ENCODE measurements at regions of chr11 and their contacts with region 1.

Region 1: GRCh38 chr11:46625391-46625790 is 8.0 kb downstream of the ATG13 start:
- DNase-seq: no peak
- H3K4me3 ChIP-seq: no peak overlapping the region
- H3K27ac ChIP-seq: no peak overlapping the region
- H3K4me1 ChIP-seq: no peaks in the 10 kb centered on the region
- H3K27me3 ChIP-seq: no peaks in the 10 kb centered on the region
- CTCF ChIP-seq: no peak

Region 2: GRCh38 chr11:46800177-46800576 is 174.8 kb after region 1 on chr11:
- intact Hi-C with region 1: loop called (anchors 10 kb)
- DNase-seq: no peak
- H3K4me3 ChIP-seq: no peak overlapping the region
- H3K27ac ChIP-seq: no peak overlapping the region
- H3K4me1 ChIP-seq: no peaks in the 10 kb centered on the region
- H3K27me3 ChIP-seq: no peaks in the 10 kb centered on the region
- CTCF ChIP-seq: no peak

Region 3: GRCh38 chr11:46832511-46833214 is 207.3 kb after region 1 on chr11:
- intact Hi-C with region 1: no loop called
- DNase-seq: no peak
- H3K4me3 ChIP-seq: no peak overlapping the region
- H3K27ac ChIP-seq: no peak overlapping the region
- H3K4me1 ChIP-seq: peaks cover 0 to 9% of the 10 kb centered on the region in 2 donors
- H3K27me3 ChIP-seq: no peaks in the 10 kb centered on the region
- CTCF ChIP-seq: no peak

Region 4: GRCh38 chr11:47152953-47153950 is 527.9 kb after region 1 on chr11:
- intact Hi-C with region 1: no loop called
- DNase-seq: peak in 1 of 2 donors; percentile 85
- H3K4me3 ChIP-seq: no peak overlapping the region
- H3K27ac ChIP-seq: no peak overlapping the region
- H3K4me1 ChIP-seq: no peaks in the 10 kb centered on the region
- H3K27me3 ChIP-seq: no peaks in the 10 kb centered on the region
- CTCF ChIP-seq: peak; percentile 89 to 95 (median 90)

Measured in ascending aorta (tissue), 2 donors.